OCI-LY7 (cell line): ENCODE measurements at regions of chr7 and their contacts with region 1.

Region 1: GRCh38 chr7:33109005-33109757 is at the start of gene RP9:
- DNase-seq: peak; percentile 92
- H3K4me3 ChIP-seq: peak within 1 kb of the TSS; percentile 99
- H3K27ac ChIP-seq: peak within 1 kb of the TSS; percentile 73
- H3K4me1 ChIP-seq: peaks cover 25% of the 10 kb centered on the region
- CTCF ChIP-seq: peak; percentile 77
- total RNA-seq, gene RP9: 21.8 and 22.0 TPM in 2 replicates

Region 2: GRCh38 chr7:32694182-32694581 is 415.0 kb before region 1 on chr7:
- CTCF ChIA-PET with region 1: no interaction called
- POLR2A ChIA-PET with region 1: interaction called, 3 read pairs
- intact Hi-C with region 1: loop called (anchors 5 kb)
- DNase-seq: no peak
- H3K4me3 ChIP-seq: no peak overlapping the region
- H3K27ac ChIP-seq: no peak overlapping the region
- H3K4me1 ChIP-seq: peaks cover 9% of the 10 kb centered on the region
- CTCF ChIP-seq: no peak

Region 3: GRCh38 chr7:32803406-32804141 is 305.6 kb before region 1 on chr7:
- CTCF ChIA-PET with region 1: interaction called, 11 read pairs
- POLR2A ChIA-PET with region 1: interaction called, 3 read pairs
- intact Hi-C with region 1: loop called (anchors 1 kb)
- DNase-seq: no peak
- H3K4me3 ChIP-seq: no peak overlapping the region
- H3K27ac ChIP-seq: no peak overlapping the region
- H3K4me1 ChIP-seq: no peaks in the 10 kb centered on the region
- CTCF ChIP-seq: no peak

Region 4: GRCh38 chr7:32891800-32892520 is 217.2 kb before region 1 on chr7:
- CTCF ChIA-PET with region 1: interaction called, 3 read pairs
- POLR2A ChIA-PET with region 1: interaction called, 8 read pairs
- intact Hi-C with region 1: loop called (anchors 1 kb)
- DNase-seq: peak; percentile 95
- H3K4me3 ChIP-seq: peak overlapping the region; percentile 84
- H3K27ac ChIP-seq: peak overlapping the region; percentile 91
- H3K4me1 ChIP-seq: peaks cover 33% of the 10 kb centered on the region
- CTCF ChIP-seq: no peak

Region 5: DNA sequence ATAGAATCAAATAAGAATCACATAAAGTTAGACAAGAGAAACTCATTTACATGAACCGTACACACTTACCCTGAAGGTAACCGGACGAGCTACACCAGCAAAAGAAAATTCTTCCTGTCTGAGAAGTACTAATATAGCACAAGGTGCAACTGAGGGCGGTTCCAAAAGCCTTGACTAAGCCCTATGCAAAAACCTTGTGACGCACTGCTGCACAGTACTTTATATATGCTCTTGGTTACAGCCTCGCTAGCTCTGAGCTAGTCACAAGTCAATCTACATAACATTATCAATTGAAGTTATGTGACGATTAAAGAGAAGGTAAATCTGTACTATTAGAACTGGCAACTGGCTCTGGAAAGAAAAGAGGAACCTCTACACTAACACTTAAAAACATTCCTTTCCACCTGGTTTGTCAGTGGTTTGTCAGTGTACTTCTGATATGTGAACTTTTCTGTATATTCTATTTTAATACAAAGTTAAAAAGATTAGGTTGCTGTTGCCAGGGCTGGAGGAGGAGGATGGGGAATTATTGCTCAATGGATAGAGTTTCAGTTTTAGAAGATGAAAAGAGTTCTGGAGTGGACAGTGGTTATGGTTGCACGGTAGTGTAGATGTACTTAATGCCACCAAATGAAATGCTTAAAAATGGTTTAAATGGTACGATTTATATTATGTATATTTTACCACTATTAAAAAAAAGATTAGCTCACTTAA is 68.2 kb before region 1 on chr7:
- CTCF ChIA-PET with region 1: interaction called, 3 read pairs
- POLR2A ChIA-PET with region 1: interaction called, 10 read pairs
- intact Hi-C with region 1: no loop called
- DNase-seq: peak; percentile 91
- H3K4me3 ChIP-seq: peak overlapping the region; percentile 69
- H3K27ac ChIP-seq: peak overlapping the region; percentile 85
- H3K4me1 ChIP-seq: peaks cover 65% of the 10 kb centered on the region
- CTCF ChIP-seq: no peak

Region 6: DNA sequence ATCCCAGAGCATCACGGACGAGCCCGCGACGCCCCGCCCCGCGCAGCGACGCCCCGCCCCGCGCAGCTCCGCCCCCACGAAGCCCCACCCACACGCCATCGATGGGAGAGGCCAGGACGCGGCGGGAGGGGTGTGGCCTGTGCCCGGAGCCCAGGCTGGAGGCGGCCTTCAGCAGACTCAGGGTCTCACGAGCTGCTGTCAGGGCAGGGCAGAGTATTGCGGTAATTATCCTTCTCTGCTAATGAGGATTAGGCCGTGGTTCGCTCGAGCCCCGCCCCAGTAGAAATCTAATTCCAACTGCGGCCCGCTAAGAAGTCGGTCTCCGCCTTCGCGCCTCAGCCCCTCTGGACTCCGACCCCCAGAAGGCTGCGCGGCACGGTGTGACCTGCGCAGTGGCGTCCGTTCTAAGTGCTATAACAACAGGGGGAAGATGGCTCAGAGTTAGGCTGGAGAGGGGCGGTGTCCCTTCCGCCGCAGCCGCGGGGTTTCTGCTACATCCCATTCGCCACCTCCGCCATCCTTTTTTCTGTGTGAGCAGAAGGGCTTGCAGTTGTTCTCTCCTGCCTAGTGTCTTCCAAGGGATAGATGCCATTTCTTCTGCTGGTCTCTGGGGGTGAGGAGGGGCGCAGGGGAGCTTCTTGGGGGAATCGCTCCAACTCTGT is 46.3 kb before region 1 on chr7:
- CTCF ChIA-PET with region 1: interaction called, 4 read pairs
- POLR2A ChIA-PET with region 1: interaction called, 10 read pairs
- intact Hi-C with region 1: loop called (anchors 2 kb)
- DNase-seq: peak; percentile 96
- H3K4me3 ChIP-seq: peak overlapping the region; percentile 99
- H3K27ac ChIP-seq: peak overlapping the region; percentile 68
- H3K4me1 ChIP-seq: peaks cover 30% of the 10 kb centered on the region
- CTCF ChIP-seq: no peak

Region 7: GRCh38 chr7:33334349-33334748 is 225.2 kb after region 1 on chr7:
- CTCF ChIA-PET with region 1: no interaction called
- POLR2A ChIA-PET with region 1: no interaction called
- intact Hi-C with region 1: no loop called
- DNase-seq: peak; percentile 2
- H3K4me3 ChIP-seq: no peak overlapping the region
- H3K27ac ChIP-seq: no peak overlapping the region
- H3K4me1 ChIP-seq: no peaks in the 10 kb centered on the region
- CTCF ChIP-seq: peak; percentile 62